ENCODE measurements at regions of chr7 and their contacts with region 1.

Region 1: DNA sequence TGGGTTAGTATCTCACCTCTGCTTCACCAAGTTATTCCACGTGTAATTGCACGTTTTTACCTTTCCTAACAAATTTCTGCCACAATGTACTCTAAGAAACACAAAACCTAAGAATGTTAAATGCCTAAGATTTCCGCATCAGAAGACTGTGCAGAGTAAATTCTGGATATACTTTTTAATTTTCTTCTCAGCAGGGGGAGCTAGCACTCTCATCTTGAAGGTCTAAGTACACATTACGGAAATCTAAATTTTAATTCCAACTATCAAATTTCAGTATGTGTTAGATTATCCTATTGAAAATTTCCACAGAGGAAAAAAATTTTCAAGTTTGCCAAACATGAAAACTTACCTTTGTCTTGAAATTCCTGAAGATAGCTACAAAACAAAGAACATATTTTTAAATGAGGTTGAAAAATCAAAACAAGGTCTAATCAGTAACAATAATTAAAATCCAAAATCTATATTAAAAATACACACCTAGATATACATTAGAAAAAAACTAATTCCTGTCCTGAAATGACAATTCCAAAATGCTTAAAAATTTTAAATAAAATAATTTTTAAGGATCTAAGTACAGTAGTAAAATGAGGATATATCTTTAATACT is 10.5 kb downstream of the SKAP2 start:
- DNase-seq: no peak
- ATAC-seq: peak; percentile 77
- H3K4me3 ChIP-seq: no peak overlapping the region
- H3K27ac ChIP-seq: no peak overlapping the region
- H3K4me1 ChIP-seq: no peaks in the 10 kb centered on the region
- H3K27me3 ChIP-seq: no peaks in the 10 kb centered on the region

Region 2: DNA sequence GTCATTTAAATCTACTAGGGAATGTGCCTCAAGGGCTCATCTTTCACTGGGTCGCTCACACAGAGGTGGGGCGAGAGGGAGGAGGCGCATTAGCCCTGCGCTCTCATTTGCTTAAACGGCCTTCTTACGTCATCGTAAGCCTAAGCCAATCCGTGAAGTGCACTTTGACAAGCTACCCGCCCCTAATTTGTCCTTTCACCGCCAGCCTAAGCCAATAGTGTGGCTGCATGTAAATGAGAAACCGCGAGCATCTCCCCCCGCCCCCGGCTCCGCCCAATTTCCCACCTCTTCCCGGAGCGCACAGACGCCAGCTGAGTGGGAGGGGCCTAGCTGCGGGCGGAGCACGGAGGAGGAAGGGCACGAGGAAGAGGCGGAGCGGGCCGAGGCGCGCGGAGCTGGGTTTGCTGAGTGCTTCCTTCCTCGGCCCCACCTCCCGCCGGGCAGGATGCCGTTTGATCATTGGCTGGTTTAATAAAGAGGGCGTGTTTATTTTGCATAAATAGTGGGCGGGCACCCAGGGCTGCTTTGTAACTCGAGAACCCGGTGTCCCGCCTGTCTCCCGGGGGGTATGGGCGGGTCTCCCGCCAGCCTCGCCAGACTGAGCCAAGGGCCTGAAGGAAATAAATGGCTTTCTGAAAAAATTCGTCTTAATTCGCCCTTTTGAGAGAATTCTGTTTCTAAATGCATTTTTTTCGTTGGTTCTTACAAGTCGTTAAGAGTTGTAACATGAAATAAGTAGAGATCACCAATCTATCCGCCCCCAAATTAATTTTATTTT is 991.4 kb before region 1 on chr7:
- intact Hi-C with region 1: loop called in 1 of 2 experiments (anchors 10 kb)
- DNase-seq: peak; percentile 95 to 100
- ATAC-seq: peak; percentile 97
- H3K4me3 ChIP-seq: no peak overlapping the region
- H3K27ac ChIP-seq: no peak overlapping the region
- H3K4me1 ChIP-seq: no peaks in the 10 kb centered on the region
- H3K27me3 ChIP-seq: peaks cover 0 to 4% of the 10 kb centered on the region in 2 donors

Region 3: GRCh38 chr7:26704786-26705185 is 149.1 kb before region 1 on chr7:
- intact Hi-C with region 1: loop called in 1 of 2 experiments (anchors 5 kb)
- DNase-seq: no peak
- ATAC-seq: peak; percentile 87
- H3K4me3 ChIP-seq: no peak overlapping the region
- H3K27ac ChIP-seq: no peak overlapping the region
- H3K4me1 ChIP-seq: peaks cover 3 to 6% of the 10 kb centered on the region in 2 donors
- H3K27me3 ChIP-seq: no peaks in the 10 kb centered on the region

Region 4: GRCh38 chr7:27143023-27143949 is 289.4 kb after region 1 on chr7 and contains the start of gene HOXA5:
- intact Hi-C with region 1: loop called in 1 of 2 experiments (anchors 2 kb)
- DNase-seq: peak; percentile 80 to 92
- ATAC-seq: peak; percentile 81
- H3K4me3 ChIP-seq: peak within 1 kb of the TSS; percentile 37 to 67
- H3K27ac ChIP-seq: peak within 1 kb of the TSS; percentile 20 to 58
- H3K4me1 ChIP-seq: no peaks in the 10 kb centered on the region
- H3K27me3 ChIP-seq: no peaks in the 10 kb centered on the region
- total RNA-seq, gene HOXA5: 8.0 to 11.8 TPM

Measured in aorta (tissue), 5 donors.